ENCODE measurements at regions of chr12 and their contacts with region 1.

Region 1: GRCh38 chr12:108514973-108515814 is at the start of gene FICD:
- DNase-seq: peak; percentile 93 to 99 (median 98)
- ATAC-seq: peak; percentile 96
- H3K4me3 ChIP-seq: peak within 1 kb of the TSS; percentile 81
- H3K4me3 Mint-ChIP-seq: peak within 1 kb of the TSS; percentile 91 to 97 (median 94)
- H3K27ac ChIP-seq: peak within 1 kb of the TSS; percentile 78
- H3K27ac Mint-ChIP-seq: peak within 1 kb of the TSS; percentile 89 to 95 (median 94)
- H3K4me1 ChIP-seq: peaks cover 8% of the 10 kb centered on the region in 2 donors
- H3K4me1 Mint-ChIP-seq: peaks cover 17 to 40% (median 22%) of the 10 kb centered on the region in 7 donors
- H3K27me3 ChIP-seq: no peaks in the 10 kb centered on the region
- H3K27me3 Mint-ChIP-seq: peaks cover 0 to 2% (median 0%) of the 10 kb centered on the region in 5 donors
- total RNA-seq, gene FICD: 2.8 to 9.7 (median 6.9) TPM

Region 2: GRCh38 chr12:106986625-106987430 is 1528.4 kb before region 1 on chr12 and contains the start of gene MTERF2:
- CTCF ChIA-PET with region 1: no interaction called
- POLR2A ChIA-PET with region 1: no interaction called
- intact Hi-C with region 1: loop called in 1 of 2 experiments (anchors 10 kb)
- DNase-seq: peak; percentile 52 to 78 (median 67)
- ATAC-seq: peak; percentile 99
- H3K4me3 ChIP-seq: peak within 1 kb of the TSS; percentile 88
- H3K4me3 Mint-ChIP-seq: peak within 1 kb of the TSS; percentile 91 to 97 (median 96)
- H3K27ac ChIP-seq: peak within 1 kb of the TSS; percentile 77
- H3K27ac Mint-ChIP-seq: peak within 1 kb of the TSS; percentile 79 to 92 (median 85)
- H3K4me1 ChIP-seq: peaks cover 12 to 14% of the 10 kb centered on the region in 2 donors
- H3K4me1 Mint-ChIP-seq: peaks cover 29 to 45% (median 41%) of the 10 kb centered on the region in 7 donors
- H3K27me3 ChIP-seq: no peaks in the 10 kb centered on the region
- H3K27me3 Mint-ChIP-seq: peaks cover 0 to 2% (median 0%) of the 10 kb centered on the region in 5 donors
- total RNA-seq, gene MTERF2: 7.1 to 12.9 (median 9.7) TPM

Region 3: DNA sequence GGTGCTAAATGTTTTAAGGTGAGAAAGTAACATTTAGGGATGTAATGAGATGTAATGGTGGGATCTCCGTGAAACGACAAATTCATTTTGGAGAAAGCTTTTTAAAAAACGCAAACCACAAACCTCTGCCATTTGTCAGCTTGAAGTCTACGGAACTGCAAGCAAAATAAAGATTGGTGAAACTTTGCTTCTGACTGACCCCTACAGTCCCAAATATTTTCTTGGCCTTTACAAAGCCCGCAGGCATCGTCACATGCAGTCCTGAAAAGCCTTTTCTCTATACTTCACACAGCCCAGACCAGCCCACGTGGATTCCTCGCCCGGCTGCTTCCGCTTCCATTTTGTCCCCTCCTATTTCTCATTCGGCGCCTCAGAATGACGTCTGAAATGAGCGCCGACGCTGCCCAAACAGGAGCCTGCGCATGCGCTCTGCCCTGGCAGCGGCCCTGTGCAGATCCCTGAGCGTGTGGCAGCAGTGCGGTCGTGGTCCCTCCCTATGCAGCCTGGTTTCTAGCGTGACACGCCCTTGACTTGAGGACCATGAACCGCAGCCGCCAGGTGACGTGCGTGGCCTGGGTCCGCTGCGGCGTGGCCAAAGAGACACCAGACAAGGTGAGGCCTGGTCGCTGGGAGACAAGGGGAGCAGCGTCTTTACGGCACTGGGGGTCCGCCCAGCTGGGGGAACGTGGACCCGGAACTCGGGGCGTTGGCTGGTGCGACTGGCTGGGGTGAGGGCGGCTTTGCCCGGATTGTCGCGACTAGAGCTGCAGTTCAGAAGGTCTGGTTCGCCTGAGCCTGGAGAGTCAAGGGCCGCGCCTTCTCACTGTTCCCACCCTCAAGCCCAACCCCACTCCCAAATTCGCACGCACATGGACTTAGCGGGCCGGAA is 829.6 kb before region 1 on chr12 and contains the start of gene PWP1:
- CTCF ChIA-PET with region 1: interaction called, 4 read pairs
- POLR2A ChIA-PET with region 1: no interaction called
- intact Hi-C with region 1: loop called (anchors 1 kb)
- DNase-seq: peak; percentile 93 to 97 (median 95)
- ATAC-seq: peak; percentile 93
- H3K4me3 ChIP-seq: peak within 1 kb of the TSS; percentile 78
- H3K4me3 Mint-ChIP-seq: peak within 1 kb of the TSS; percentile 90 to 99 (median 95)
- H3K27ac ChIP-seq: peak within 1 kb of the TSS; percentile 88
- H3K27ac Mint-ChIP-seq: peak within 1 kb of the TSS; percentile 90 to 99 (median 97)
- H3K4me1 ChIP-seq: peaks cover 12 to 19% of the 10 kb centered on the region in 2 donors
- H3K4me1 Mint-ChIP-seq: peaks cover 23 to 40% (median 35%) of the 10 kb centered on the region in 7 donors
- H3K27me3 ChIP-seq: no peaks in the 10 kb centered on the region
- H3K27me3 Mint-ChIP-seq: peaks cover 0 to 3% (median 0%) of the 10 kb centered on the region in 5 donors
- total RNA-seq, gene PWP1: 20.9 to 42.5 (median 25.7) TPM

Region 4: GRCh38 chr12:108618079-108618952 is 103.1 kb after region 1 on chr12:
- CTCF ChIA-PET with region 1: interaction called, 3 read pairs
- POLR2A ChIA-PET with region 1: no interaction called
- intact Hi-C with region 1: loop called (anchors 1 to 2 kb)
- DNase-seq: peak; percentile 61 to 81 (median 74)
- ATAC-seq: peak; percentile 72
- H3K4me3 ChIP-seq: no peak overlapping the region
- H3K4me3 Mint-ChIP-seq: peak overlapping the region in 8 of 10 donors; percentile 13 to 54 (median 34)
- H3K27ac ChIP-seq: peak overlapping the region; percentile 65
- H3K27ac Mint-ChIP-seq: peak overlapping the region; percentile 67 to 92 (median 79)
- H3K4me1 ChIP-seq: peaks cover 34 to 42% of the 10 kb centered on the region in 2 donors
- H3K4me1 Mint-ChIP-seq: peaks cover 44 to 72% (median 64%) of the 10 kb centered on the region in 7 donors
- H3K27me3 ChIP-seq: no peaks in the 10 kb centered on the region
- H3K27me3 Mint-ChIP-seq: no peaks in the 10 kb centered on the region

Region 5: GRCh38 chr12:108803428-108804105 is 288.4 kb after region 1 on chr12:
- CTCF ChIA-PET with region 1: no interaction called
- POLR2A ChIA-PET with region 1: no interaction called
- intact Hi-C with region 1: loop called in 1 of 2 experiments (anchors 1 kb)
- DNase-seq: peak; percentile 25 to 78 (median 70)
- ATAC-seq: peak; percentile 93
- H3K4me3 ChIP-seq: no peak overlapping the region
- H3K4me3 Mint-ChIP-seq: no peak overlapping the region
- H3K27ac ChIP-seq: no peak overlapping the region
- H3K27ac Mint-ChIP-seq: peak overlapping the region in 3 of 9 donors; percentile 37 to 62 (median 48)
- H3K4me1 ChIP-seq: peaks cover 0 to 3% of the 10 kb centered on the region in 2 donors
- H3K4me1 Mint-ChIP-seq: peaks cover 0 to 10% (median 3%) of the 10 kb centered on the region in 7 donors
- H3K27me3 ChIP-seq: no peaks in the 10 kb centered on the region
- H3K27me3 Mint-ChIP-seq: no peaks in the 10 kb centered on the region

Region 6: DNA sequence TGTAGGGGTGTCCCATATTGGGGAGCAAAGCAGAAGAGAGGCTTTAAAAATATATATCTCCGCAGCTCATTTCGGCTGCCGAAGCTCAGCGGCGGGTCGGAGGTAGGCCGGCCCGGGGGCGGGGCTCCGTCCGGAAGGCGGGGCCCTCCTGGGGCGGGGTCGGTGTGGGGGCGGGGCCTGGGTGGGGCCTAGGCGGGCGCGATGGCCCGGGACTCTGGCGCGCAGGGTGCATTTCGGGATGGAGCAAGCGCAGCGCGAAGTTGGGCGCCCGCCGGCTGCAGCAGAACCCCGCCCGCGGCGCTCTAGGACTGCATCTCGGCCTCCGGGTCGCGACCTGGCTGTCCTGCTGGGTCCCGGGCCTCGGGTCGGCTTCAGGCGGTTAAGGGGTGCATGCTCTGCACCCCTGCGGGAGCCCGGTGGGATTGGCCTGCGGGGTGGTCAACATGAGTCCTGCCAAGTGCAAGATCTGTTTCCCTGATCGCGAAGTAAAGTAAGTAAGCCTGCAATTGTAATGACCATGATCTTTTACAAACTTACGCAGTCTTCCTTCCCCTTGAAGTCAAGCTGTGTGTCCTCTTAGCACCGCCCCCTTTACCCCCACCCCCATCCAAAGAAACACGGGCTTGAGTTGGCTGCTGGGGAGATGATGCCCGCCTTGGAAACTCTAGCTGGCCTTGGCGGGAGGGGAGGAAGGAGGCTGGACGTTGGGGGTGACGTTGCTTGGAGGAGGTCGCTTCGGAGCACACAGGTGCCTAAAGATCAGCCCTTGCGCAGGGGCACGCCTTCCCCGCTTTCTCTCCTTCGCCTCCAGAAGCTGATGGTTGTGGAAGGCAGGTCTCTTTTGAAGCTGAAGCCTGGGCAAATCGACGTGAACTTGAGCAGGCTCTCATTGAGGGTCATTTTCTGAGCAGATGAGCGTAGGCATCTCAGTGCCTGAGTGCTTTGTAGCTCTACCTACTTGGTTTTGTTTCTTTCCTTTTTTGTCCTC is 639.6 kb after region 1 on chr12:
- CTCF ChIA-PET with region 1: no interaction called
- POLR2A ChIA-PET with region 1: no interaction called
- intact Hi-C with region 1: loop called (anchors 1 to 5 kb)
- DNase-seq: peak; percentile 58 to 87 (median 76)
- ATAC-seq: peak; percentile 99
- H3K4me3 ChIP-seq: peak overlapping the region; percentile 73
- H3K4me3 Mint-ChIP-seq: peak overlapping the region; percentile 85 to 98 (median 95)
- H3K27ac ChIP-seq: peak overlapping the region; percentile 61
- H3K27ac Mint-ChIP-seq: peak overlapping the region; percentile 71 to 95 (median 87)
- H3K4me1 ChIP-seq: peaks cover 5 to 10% of the 10 kb centered on the region in 2 donors
- H3K4me1 Mint-ChIP-seq: peaks cover 13 to 33% (median 19%) of the 10 kb centered on the region in 7 donors
- H3K27me3 ChIP-seq: no peaks in the 10 kb centered on the region
- H3K27me3 Mint-ChIP-seq: peaks cover 0 to 19% (median 0%) of the 10 kb centered on the region in 5 donors